Body of pancreas (tissue), 4 donors: ENCODE measurements at regions of chr22 and their contacts with region 1.

Region 1: GRCh38 chr22:42432020-42432596 is at the start of gene NFAM1:
- DNase-seq: peak in 2 of 4 donors; percentile 22 to 67
- ATAC-seq: no peak
- H3K4me3 ChIP-seq: no peak within 1 kb of the TSS
- H3K27ac ChIP-seq: peak within 1 kb of the TSS in 1 of 4 donors; percentile 66
- H3K4me1 ChIP-seq: peaks cover under 1% of the 10 kb centered on the region
- H3K27me3 ChIP-seq: no peaks in the 10 kb centered on the region
- CTCF ChIP-seq: no peak
- POLR2A ChIP-seq: peak in 1 of 3 donors; percentile 68
- total RNA-seq, gene NFAM1: 0.66 to 1.0 TPM

Region 2: DNA sequence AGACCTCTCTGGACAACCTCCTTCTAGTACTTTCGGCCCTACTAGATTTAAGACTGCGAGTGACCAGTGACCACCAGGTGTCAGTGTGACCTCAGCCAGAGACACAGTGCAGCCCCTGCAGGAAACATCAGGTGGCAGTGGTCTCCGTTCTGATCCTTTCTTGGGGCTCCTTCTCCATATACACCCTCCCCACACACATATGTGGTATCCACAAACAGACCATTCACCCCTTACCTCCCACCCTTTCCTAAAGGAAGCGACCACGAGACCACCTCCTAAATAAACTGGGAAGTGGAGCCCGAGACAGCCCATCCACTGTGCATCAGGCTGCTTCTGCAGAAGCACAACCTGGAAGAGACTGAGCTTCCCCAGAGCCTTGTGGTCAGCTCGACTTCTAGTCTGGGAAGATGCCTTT is 263.0 kb before region 1 on chr22:
- intact Hi-C with region 1: loop called (anchors 5 kb)
- DNase-seq: peak; percentile 66 to 79 (median 74)
- ATAC-seq: peak; percentile 72
- H3K4me3 ChIP-seq: no peak overlapping the region
- H3K27ac ChIP-seq: no peak overlapping the region
- H3K4me1 ChIP-seq: peaks cover 16% of the 10 kb centered on the region
- H3K27me3 ChIP-seq: no peaks in the 10 kb centered on the region
- CTCF ChIP-seq: peak; percentile 83 to 99 (median 84)
- POLR2A ChIP-seq: no peak